ENCODE measurements at regions of chr12 and their contacts with region 1.

Region 1: DNA sequence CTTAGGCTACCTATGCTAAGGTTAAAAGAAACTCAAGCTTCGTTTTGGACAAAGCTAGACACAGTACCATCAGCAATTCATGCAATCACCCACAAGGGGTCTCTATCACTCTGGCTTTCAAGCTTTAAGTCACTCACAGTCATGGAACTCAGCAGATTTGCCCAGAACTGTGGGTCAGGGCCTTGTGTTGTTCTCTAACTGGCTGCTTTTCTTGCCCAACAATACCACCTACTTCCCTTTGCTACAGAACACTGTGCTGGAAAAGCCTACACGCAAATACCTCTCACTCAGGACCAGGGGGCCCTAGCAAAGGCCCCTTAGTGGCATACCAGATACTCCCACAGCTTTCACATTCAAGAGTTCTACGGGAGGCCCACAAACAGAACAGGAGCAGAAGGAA is 9.1 kb downstream of the NEMP1 start:
- DNase-seq: peak in 3 of 4 donors; percentile 59 to 88 (median 69)
- ATAC-seq: peak; percentile 98
- H3K4me3 ChIP-seq: no peak overlapping the region
- H3K27ac ChIP-seq: peak overlapping the region; percentile 68 to 71
- H3K4me1 ChIP-seq: peaks cover 2 to 17% of the 10 kb centered on the region in 2 donors
- H3K27me3 ChIP-seq: no peaks in the 10 kb centered on the region
- CTCF ChIP-seq: peak; percentile 87 to 88

Region 2: DNA sequence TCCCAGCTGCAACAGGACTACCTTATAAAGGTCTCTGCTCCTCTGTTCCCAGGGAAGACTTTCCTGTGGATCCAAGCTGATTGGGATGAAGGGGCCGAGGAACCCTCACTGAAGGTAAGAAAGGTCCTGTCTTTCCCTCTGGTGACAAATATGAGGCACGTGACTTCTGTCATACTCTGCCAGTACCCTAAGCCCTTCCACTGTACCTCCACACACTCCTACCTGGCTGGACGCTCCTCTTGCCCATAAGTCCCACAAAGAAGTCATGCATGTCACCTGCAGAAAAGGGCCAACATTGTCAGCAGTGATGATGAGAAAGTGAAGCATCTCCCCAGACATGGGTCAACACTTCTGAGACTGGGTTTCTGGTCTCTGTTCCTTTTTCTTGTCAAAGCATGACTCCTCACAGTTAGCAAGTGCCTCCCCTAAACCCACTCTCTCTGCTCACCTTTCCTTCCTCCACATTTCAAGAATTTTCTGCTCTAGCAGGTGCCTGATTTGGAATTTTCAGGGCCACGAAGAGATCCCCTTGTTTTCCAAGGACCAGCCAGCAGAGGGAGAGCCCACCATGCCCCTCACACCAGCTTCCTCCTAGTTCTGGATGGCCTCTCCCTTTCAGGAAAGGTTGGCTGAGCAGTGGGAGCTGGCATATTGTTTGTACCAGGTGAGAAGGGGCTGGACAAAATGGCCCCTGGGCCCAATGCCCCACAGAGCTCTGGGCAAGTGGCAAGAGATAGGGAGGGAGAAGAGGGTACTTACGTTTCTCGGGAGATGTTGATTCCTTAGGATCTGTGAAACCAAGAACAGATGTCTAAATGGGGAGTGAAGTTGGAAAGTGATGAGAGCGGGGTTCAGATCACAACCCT is 56.7 kb before region 1 on chr12:
- intact Hi-C with region 1: loop called in 1 of 2 experiments (anchors 10 kb)
- DNase-seq: no peak
- ATAC-seq: no peak
- H3K4me3 ChIP-seq: no peak overlapping the region
- H3K27ac ChIP-seq: no peak overlapping the region
- H3K4me1 ChIP-seq: peaks cover 0 to 7% of the 10 kb centered on the region in 2 donors
- H3K27me3 ChIP-seq: peaks cover 0 to 17% of the 10 kb centered on the region in 2 donors
- CTCF ChIP-seq: no peak

Region 3: GRCh38 chr12:57112492-57113294 is 43.2 kb after region 1 on chr12:
- intact Hi-C with region 1: loop called in 1 of 2 experiments (anchors 2 kb)
- DNase-seq: no peak
- ATAC-seq: no peak
- H3K4me3 ChIP-seq: peak overlapping the region; percentile 81 to 96
- H3K27ac ChIP-seq: peak overlapping the region; percentile 100
- H3K4me1 ChIP-seq: peaks cover 15 to 39% of the 10 kb centered on the region in 2 donors
- H3K27me3 ChIP-seq: no peaks in the 10 kb centered on the region
- CTCF ChIP-seq: peak; percentile 71 to 77